GM12878 (cell line): ENCODE measurements at regions of chr9 and their contacts with region 1.

Region 1: GRCh38 chr9:35079426-35080341 is at the start of gene FANCG:
- DNase-seq: peak; percentile 79
- ATAC-seq: peak; percentile 95
- H3K4me3 ChIP-seq: peak within 1 kb of the TSS; percentile 90
- H3K27ac ChIP-seq: peak within 1 kb of the TSS; percentile 88
- H3K4me1 ChIP-seq: peaks cover 6% of the 10 kb centered on the region; the same call in 1 of the 2 replicates
- H3K27me3 ChIP-seq: no peaks in the 10 kb centered on the region
- CTCF ChIP-seq: no peak
- EP300 ChIP-seq: no peak
- POLR2A ChIP-seq: peak; percentile 92
- RAD21 ChIP-seq: no peak
- polyA plus RNA-seq, gene FANCG: 16.4 to 24.2 TPM

Region 2: GRCh38 chr9:35096035-35096849 is 16.6 kb after region 1 on chr9 and contains the start of gene PIGO:
- CTCF ChIA-PET with region 1: interaction called, 44 read pairs
- POLR2A ChIA-PET with region 1: interaction called, 35 read pairs
- RAD21 ChIA-PET with region 1: interaction called, 5 read pairs
- SMC1A ChIA-PET with region 1: interaction called, 12 read pairs
- in situ Hi-C with region 1: no loop called
- intact Hi-C with region 1: loop called (anchors 1 kb)
- DNase-seq: no peak
- ATAC-seq: peak; percentile 95
- H3K4me3 ChIP-seq: peak within 1 kb of the TSS; percentile 81
- H3K27ac ChIP-seq: peak within 1 kb of the TSS; percentile 100
- H3K4me1 ChIP-seq: peaks cover 7% of the 10 kb centered on the region
- H3K27me3 ChIP-seq: no peaks in the 10 kb centered on the region
- CTCF ChIP-seq: peak; percentile 87 to 98 (median 96)
- EP300 ChIP-seq: no peak
- POLR2A ChIP-seq: peak; percentile 98
- RAD21 ChIP-seq: peak; percentile 69
- polyA plus RNA-seq, gene PIGO: 8.3 to 13.1 TPM

Region 3: GRCh38 chr9:35102926-35103659 is 23.4 kb after region 1 on chr9 and contains the start of gene STOML2:
- CTCF ChIA-PET with region 1: interaction called, 11 read pairs
- POLR2A ChIA-PET with region 1: interaction called, 35 read pairs
- RAD21 ChIA-PET with region 1: interaction called, 4 read pairs
- SMC1A ChIA-PET with region 1: interaction called, 8 read pairs
- in situ Hi-C with region 1: no loop called
- intact Hi-C with region 1: loop called (anchors 2 kb)
- DNase-seq: peak; percentile 78
- ATAC-seq: peak; percentile 99
- H3K4me3 ChIP-seq: peak within 1 kb of the TSS; percentile 79
- H3K27ac ChIP-seq: peak within 1 kb of the TSS; percentile 88
- H3K4me1 ChIP-seq: peaks cover 5% of the 10 kb centered on the region
- H3K27me3 ChIP-seq: no peaks in the 10 kb centered on the region
- CTCF ChIP-seq: no peak
- EP300 ChIP-seq: peak in 1 of 2 experiments; percentile 73; a peak in 2 of 4 replicates
- POLR2A ChIP-seq: peak; percentile 88
- RAD21 ChIP-seq: no peak
- polyA plus RNA-seq, gene STOML2: 112 to 148 TPM